ENCODE measurements at regions of chr7 and their contacts with region 1.

Region 1: GRCh38 chr7:128883622-128884501 is 21.2 kb downstream of the ATP6V1F start:
- DNase-seq: peak; percentile 74 to 84
- H3K4me3 ChIP-seq: no peak overlapping the region
- H3K4me3 Mint-ChIP-seq: no peak overlapping the region
- H3K27ac Mint-ChIP-seq: peak overlapping the region; percentile 42
- H3K4me1 ChIP-seq: peaks cover 16% of the 10 kb centered on the region
- H3K4me1 Mint-ChIP-seq: no peaks in the 10 kb centered on the region
- H3K27me3 ChIP-seq: no peaks in the 10 kb centered on the region
- H3K27me3 Mint-ChIP-seq: no peaks in the 10 kb centered on the region
- CTCF ChIP-seq: peak; percentile 75 to 82

Region 2: DNA sequence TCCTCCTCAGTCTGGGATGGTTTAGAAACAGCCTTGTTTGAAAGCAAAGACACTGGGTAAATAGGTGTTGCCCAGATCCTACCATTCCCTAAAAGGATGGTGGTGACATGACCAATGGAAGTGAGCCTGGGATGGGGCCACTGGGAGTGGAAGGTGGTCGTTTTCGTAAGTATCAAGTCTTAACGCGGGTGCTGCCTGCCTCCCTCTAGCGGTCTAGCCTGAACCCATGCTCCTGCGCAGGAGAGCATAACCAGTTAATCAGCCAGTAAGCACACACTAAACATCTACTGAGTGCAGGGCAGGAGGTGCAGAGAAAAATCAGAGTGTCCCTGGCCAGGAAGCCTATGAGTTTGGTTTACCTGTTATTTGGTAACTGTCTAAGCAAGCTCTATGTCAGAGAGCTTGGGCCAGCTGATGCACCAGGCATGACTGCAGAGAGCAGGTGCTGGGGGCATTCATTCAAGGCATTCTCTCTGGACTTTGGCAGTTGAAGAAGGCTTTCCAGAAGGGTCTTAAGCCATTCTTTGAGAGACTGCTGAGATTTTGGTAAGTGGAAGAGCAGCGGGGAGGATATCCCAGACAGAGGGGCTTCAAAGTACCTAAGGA is 210.8 kb before region 1 on chr7:
- CTCF ChIA-PET with region 1: interaction called, 4 read pairs
- POLR2A ChIA-PET with region 1: no interaction called
- intact Hi-C with region 1: loop called (anchors 5 kb)
- DNase-seq: peak in 1 of 2 experiments; percentile 49
- H3K4me3 ChIP-seq: no peak overlapping the region
- H3K4me3 Mint-ChIP-seq: no peak overlapping the region
- H3K27ac Mint-ChIP-seq: no peak overlapping the region
- H3K4me1 ChIP-seq: no peaks in the 10 kb centered on the region
- H3K4me1 Mint-ChIP-seq: no peaks in the 10 kb centered on the region
- H3K27me3 ChIP-seq: no peaks in the 10 kb centered on the region
- H3K27me3 Mint-ChIP-seq: peaks cover 2% of the 10 kb centered on the region
- CTCF ChIP-seq: peak; percentile 58 to 77

Region 3: GRCh38 chr7:128791121-128791961 is 92.5 kb before region 1 on chr7:
- CTCF ChIA-PET with region 1: interaction called, 4 read pairs
- POLR2A ChIA-PET with region 1: no interaction called
- intact Hi-C with region 1: loop called (anchors 5 kb)
- DNase-seq: peak; percentile 75 to 78
- H3K4me3 ChIP-seq: peak overlapping the region; percentile 82
- H3K4me3 Mint-ChIP-seq: peak overlapping the region; percentile 85
- H3K27ac Mint-ChIP-seq: no peak overlapping the region
- H3K4me1 ChIP-seq: no peaks in the 10 kb centered on the region
- H3K4me1 Mint-ChIP-seq: no peaks in the 10 kb centered on the region
- H3K27me3 ChIP-seq: peaks cover 1% of the 10 kb centered on the region
- H3K27me3 Mint-ChIP-seq: peaks cover 7% of the 10 kb centered on the region
- CTCF ChIP-seq: no peak

Region 4: DNA sequence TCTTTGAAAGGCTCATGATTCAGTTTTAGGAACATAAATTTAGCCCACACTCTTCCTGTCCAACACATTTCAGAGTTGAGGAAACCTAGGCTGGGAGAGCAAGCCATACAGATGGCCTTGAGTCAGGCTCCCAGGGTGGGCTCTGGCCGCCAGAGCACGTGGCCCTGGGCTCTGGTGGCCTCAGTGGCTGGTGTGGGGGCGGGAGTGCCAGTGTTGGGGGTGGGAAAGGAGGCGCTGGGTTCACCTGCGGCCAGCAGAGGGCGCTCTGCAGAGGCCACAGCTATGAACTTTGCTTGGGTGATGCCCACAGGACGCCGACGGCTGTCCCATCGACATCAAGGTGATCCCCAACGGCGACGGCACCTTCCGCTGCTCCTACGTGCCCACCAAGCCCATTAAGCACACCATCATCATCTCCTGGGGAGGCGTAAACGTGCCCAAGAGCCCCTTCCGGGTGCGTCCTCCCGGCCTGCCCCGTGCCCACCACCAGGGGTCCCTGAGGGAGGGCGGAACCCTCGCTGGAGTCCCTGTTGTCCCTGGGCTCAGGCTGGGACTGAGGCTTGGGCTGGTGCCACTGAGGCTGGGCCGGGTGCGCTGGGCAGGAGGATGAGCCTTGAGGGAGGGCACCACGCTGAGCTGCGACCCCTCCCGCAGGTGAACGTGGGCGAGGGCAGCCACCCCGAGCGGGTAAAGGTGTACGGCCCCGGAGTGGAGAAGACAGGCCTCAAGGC is 41.8 kb before region 1 on chr7:
- CTCF ChIA-PET with region 1: interaction called, 4 read pairs
- POLR2A ChIA-PET with region 1: no interaction called
- intact Hi-C with region 1: loop called (anchors 1 kb)
- DNase-seq: peak in 1 of 2 experiments; percentile 58
- H3K4me3 ChIP-seq: no peak overlapping the region
- H3K4me3 Mint-ChIP-seq: no peak overlapping the region
- H3K27ac Mint-ChIP-seq: no peak overlapping the region
- H3K4me1 ChIP-seq: no peaks in the 10 kb centered on the region
- H3K4me1 Mint-ChIP-seq: no peaks in the 10 kb centered on the region
- H3K27me3 ChIP-seq: no peaks in the 10 kb centered on the region
- H3K27me3 Mint-ChIP-seq: no peaks in the 10 kb centered on the region
- CTCF ChIP-seq: peak; percentile 63 to 88

Region 5: GRCh38 chr7:128862571-128863432 is 21.1 kb before region 1 on chr7 and contains the start of gene ATP6V1F:
- CTCF ChIA-PET with region 1: interaction called, 33 read pairs
- POLR2A ChIA-PET with region 1: interaction called, 3 read pairs
- intact Hi-C with region 1: loop called (anchors 1 kb)
- DNase-seq: peak; percentile 98 to 99
- H3K4me3 ChIP-seq: peak within 1 kb of the TSS; percentile 93
- H3K4me3 Mint-ChIP-seq: peak within 1 kb of the TSS; percentile 84
- H3K27ac Mint-ChIP-seq: peak within 1 kb of the TSS; percentile 87
- H3K4me1 ChIP-seq: peaks cover 8% of the 10 kb centered on the region; the same call in 1 of the 2 replicates
- H3K4me1 Mint-ChIP-seq: peaks cover 12% of the 10 kb centered on the region
- H3K27me3 ChIP-seq: no peaks in the 10 kb centered on the region
- H3K27me3 Mint-ChIP-seq: no peaks in the 10 kb centered on the region
- CTCF ChIP-seq: no peak
- total RNA-seq, gene ATP6V1F: 162 and 168 TPM in 2 replicates

Region 6: GRCh38 chr7:128869138-128869943 is 14.5 kb before region 1 on chr7:
- CTCF ChIA-PET with region 1: interaction called, 5 read pairs
- POLR2A ChIA-PET with region 1: no interaction called
- intact Hi-C with region 1: loop called (anchors 1 kb)
- DNase-seq: peak; percentile 66 to 79
- H3K4me3 ChIP-seq: peak overlapping the region; percentile 57
- H3K4me3 Mint-ChIP-seq: peak overlapping the region; percentile 79
- H3K27ac Mint-ChIP-seq: no peak overlapping the region
- H3K4me1 ChIP-seq: peaks cover 12% of the 10 kb centered on the region; the same call in 1 of the 2 replicates
- H3K4me1 Mint-ChIP-seq: peaks cover 7% of the 10 kb centered on the region
- H3K27me3 ChIP-seq: no peaks in the 10 kb centered on the region
- H3K27me3 Mint-ChIP-seq: peaks cover 3% of the 10 kb centered on the region
- CTCF ChIP-seq: peak in 1 of 2 experiments; percentile 10

Measured in Caco-2 (cell line).